ENCODE measurements at regions of chr16 and their contacts with region 1.

Region 1: DNA sequence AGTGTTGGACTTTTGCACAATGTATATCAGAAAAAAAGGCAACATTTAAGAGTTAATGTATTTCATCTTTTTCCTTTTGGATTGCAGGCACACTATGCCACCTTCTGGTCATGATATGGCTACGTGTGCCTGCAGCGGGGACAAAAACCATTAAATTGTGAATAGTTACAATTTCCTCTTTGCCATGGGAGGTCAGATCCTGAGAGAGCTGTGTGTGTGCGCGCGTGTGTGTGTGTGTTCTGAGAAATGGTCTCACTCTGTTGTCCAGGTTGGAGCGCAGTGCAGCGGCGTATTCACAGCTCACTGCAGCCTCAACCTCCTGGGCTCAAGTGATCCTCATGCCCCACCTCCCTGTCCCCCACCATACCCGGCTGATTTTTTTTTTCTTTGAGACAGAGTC is 4.3 kb upstream of the SGF29 start:
- DNase-seq: peak; percentile 33
- ATAC-seq: peak; percentile 33
- H3K4me3 ChIP-seq: no peak overlapping the region
- H3K27ac ChIP-seq: no peak overlapping the region
- H3K4me1 ChIP-seq: peaks cover 0 to 14% of the 10 kb centered on the region in 2 experiments; a peak in 2 of 4 replicates
- H3K27me3 ChIP-seq: no peaks in the 10 kb centered on the region
- CTCF ChIP-seq: peak; percentile 50 to 91 (median 62)
- POLR2A ChIP-seq: no peak
- RAD21 ChIP-seq: peak; percentile 90

Region 2: GRCh38 chr16:28211712-28212534 is 337.5 kb before region 1 on chr16 and contains the start of gene XPO6:
- CTCF ChIA-PET with region 1: no interaction called
- POLR2A ChIA-PET with region 1: no interaction called
- RAD21 ChIA-PET with region 1: no interaction called
- intact Hi-C with region 1: loop called (anchors 5 kb)
- DNase-seq: peak; percentile 80
- ATAC-seq: peak; percentile 89
- H3K4me3 ChIP-seq: peak within 1 kb of the TSS; percentile 89 to 90
- H3K27ac ChIP-seq: peak within 1 kb of the TSS; percentile 86
- H3K4me1 ChIP-seq: peaks cover 17 to 24% of the 10 kb centered on the region in 2 experiments
- H3K27me3 ChIP-seq: no peaks in the 10 kb centered on the region
- CTCF ChIP-seq: no peak
- POLR2A ChIP-seq: no peak
- RAD21 ChIP-seq: no peak
- total RNA-seq, gene XPO6: 162 TPM

Region 3: DNA sequence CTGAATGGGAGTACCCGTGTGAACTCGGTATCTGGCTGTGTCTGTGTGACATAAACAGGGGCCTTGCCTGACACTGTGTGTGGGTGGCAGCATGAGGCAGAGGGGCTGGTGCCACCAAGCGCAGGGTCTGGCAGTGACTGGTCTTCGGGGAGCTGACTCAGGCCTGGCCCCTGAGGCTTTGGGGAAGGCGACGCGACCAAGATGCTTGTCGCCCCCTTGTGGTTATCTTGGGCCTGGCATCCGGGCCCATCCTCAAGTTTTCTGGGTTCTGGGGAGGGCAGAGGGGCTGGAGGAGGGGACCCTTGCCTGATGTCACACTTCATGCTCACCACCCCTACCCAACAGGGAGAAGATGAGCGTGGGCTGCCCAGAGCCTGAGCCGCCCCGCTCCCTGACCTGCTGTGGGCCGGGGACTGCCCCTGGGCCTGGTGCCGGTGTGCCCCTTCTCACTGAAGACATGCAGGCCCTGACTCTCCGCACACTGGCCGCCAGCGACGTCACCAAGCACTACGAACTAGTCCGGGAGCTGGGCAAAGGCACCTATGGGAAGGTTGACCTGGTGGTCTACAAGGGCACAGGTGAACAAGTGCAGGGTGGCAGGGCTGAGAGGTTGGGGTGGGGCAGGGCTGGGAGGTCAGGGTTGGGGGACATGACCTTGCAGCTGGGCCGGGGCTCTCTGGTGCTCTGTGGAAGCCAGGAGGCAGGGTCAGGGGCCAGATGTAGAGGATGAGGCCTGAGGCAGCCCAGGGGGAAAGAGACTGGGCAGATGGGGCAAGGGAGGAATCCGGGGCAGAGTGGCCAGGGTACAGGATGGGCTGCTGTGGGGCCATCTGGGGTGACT is 232.1 kb before region 1 on chr16:
- CTCF ChIA-PET with region 1: no interaction called
- POLR2A ChIA-PET with region 1: no interaction called
- RAD21 ChIA-PET with region 1: no interaction called
- intact Hi-C with region 1: loop called (anchors 5 kb)
- DNase-seq: peak; percentile 21
- ATAC-seq: peak; percentile 76
- H3K4me3 ChIP-seq: no peak overlapping the region
- H3K27ac ChIP-seq: no peak overlapping the region
- H3K4me1 ChIP-seq: peaks cover 4 to 10% of the 10 kb centered on the region in 2 experiments; a peak in 2 of 4 replicates
- H3K27me3 ChIP-seq: no peaks in the 10 kb centered on the region
- CTCF ChIP-seq: peak; percentile 66 to 94 (median 90)
- POLR2A ChIP-seq: no peak
- RAD21 ChIP-seq: peak; percentile 81

Region 4: GRCh38 chr16:28478506-28479200 is 70.7 kb before region 1 on chr16:
- CTCF ChIA-PET with region 1: no interaction called
- POLR2A ChIA-PET with region 1: no interaction called
- RAD21 ChIA-PET with region 1: no interaction called
- intact Hi-C with region 1: no loop called
- DNase-seq: no peak
- ATAC-seq: no peak
- H3K4me3 ChIP-seq: no peak overlapping the region
- H3K27ac ChIP-seq: no peak overlapping the region
- H3K4me1 ChIP-seq: no peaks in the 10 kb centered on the region
- H3K27me3 ChIP-seq: no peaks in the 10 kb centered on the region
- CTCF ChIP-seq: no peak
- POLR2A ChIP-seq: no peak
- RAD21 ChIP-seq: no peak

Region 5: DNA sequence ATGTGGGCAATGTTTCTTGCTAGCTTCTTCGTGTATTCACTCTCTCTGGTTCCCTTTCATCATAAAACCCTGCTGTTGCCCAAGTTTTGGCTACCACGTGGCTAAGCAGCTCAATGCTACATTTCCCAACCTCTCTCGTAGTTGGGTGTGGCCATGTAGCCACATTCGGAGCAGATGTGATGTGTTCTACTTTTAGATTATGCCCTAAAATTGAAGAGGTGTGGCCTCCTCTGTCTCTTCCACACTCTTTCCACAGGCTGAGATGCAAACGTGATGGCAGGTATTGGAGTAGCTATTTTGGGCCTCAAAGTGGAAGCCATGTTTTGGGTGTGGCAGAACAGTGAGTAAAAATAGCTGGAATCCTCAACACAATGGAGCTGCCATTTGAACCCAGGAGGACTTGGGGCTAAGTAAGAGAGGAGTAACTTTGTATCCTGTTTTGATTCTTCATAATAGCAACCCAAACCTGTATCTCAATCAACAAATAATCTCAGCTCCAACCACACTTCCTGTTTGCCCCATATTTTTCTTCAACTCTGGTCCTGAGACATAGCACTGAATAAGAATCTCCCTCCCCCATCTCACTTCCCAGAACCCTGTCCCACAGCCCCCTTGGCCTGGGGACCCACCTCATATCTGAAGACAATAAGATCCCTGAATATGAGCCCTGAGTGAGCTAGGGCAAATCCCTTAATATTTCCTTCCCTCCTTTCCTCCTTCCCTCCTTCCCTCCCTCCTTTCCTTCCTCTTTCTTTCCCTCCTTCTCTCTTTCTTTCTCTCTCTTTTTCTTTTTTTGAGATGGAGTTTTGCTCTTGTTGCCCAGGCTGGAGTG is 14.6 kb before region 1 on chr16:
- CTCF ChIA-PET with region 1: no interaction called
- POLR2A ChIA-PET with region 1: no interaction called
- RAD21 ChIA-PET with region 1: no interaction called
- intact Hi-C with region 1: no loop called
- DNase-seq: no peak
- ATAC-seq: no peak
- H3K4me3 ChIP-seq: no peak overlapping the region
- H3K27ac ChIP-seq: no peak overlapping the region
- H3K4me1 ChIP-seq: peaks cover 0 to 12% of the 10 kb centered on the region in 2 experiments; a peak in 3 of 4 replicates
- H3K27me3 ChIP-seq: no peaks in the 10 kb centered on the region
- CTCF ChIP-seq: no peak
- POLR2A ChIP-seq: no peak
- RAD21 ChIP-seq: no peak

Region 6: DNA sequence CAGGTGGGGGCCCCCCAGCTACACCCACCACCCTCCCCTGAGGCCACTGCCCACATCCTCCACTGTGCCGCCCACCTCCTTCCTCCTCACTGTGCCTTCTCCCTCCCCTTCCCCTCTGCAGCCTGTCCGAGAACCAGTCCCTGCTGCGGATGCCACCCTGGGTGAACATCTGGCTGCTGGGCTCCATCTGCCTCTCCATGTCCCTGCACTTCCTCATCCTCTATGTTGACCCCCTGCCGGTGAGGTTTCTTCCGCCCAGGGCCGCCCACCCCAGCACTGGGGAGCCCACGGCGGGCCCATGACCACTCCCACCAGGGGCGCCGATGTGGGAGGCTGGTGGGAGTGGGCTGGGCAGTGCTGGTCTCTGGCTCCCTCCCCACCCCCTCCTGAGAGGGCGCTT is 353.5 kb after region 1 on chr16:
- CTCF ChIA-PET with region 1: no interaction called
- POLR2A ChIA-PET with region 1: no interaction called
- RAD21 ChIA-PET with region 1: no interaction called
- intact Hi-C with region 1: no loop called
- DNase-seq: no peak
- ATAC-seq: no peak
- H3K4me3 ChIP-seq: no peak overlapping the region
- H3K27ac ChIP-seq: no peak overlapping the region
- H3K4me1 ChIP-seq: peaks cover 5 to 12% of the 10 kb centered on the region in 2 experiments; a peak in 3 of 4 replicates
- H3K27me3 ChIP-seq: no peaks in the 10 kb centered on the region
- CTCF ChIP-seq: no peak
- POLR2A ChIP-seq: no peak
- RAD21 ChIP-seq: no peak

Region 7: GRCh38 chr16:28924732-28925385 is 375.5 kb after region 1 on chr16 and contains the start of gene RABEP2:
- CTCF ChIA-PET with region 1: no interaction called
- POLR2A ChIA-PET with region 1: no interaction called
- RAD21 ChIA-PET with region 1: no interaction called
- intact Hi-C with region 1: no loop called
- DNase-seq: peak; percentile 92
- ATAC-seq: peak; percentile 88
- H3K4me3 ChIP-seq: peak within 1 kb of the TSS; percentile 60 to 77
- H3K27ac ChIP-seq: peak within 1 kb of the TSS; percentile 98
- H3K4me1 ChIP-seq: peaks cover 7 to 20% of the 10 kb centered on the region in 2 experiments
- H3K27me3 ChIP-seq: no peaks in the 10 kb centered on the region
- CTCF ChIP-seq: no peak
- POLR2A ChIP-seq: no peak
- RAD21 ChIP-seq: no peak
- total RNA-seq, gene RABEP2: 13.4 TPM

Measured in HCT116 (cell line).